ENCODE measurements at regions of chr10 and their contacts with region 1.

Region 1: GRCh38 chr10:44857363-44858016 is 53.6 kb upstream of the TMEM72 start:
- DNase-seq: peak; percentile 89

Region 2: GRCh38 chr10:43671656-43672531 is 1185.6 kb before region 1 on chr10:
- intact Hi-C with region 1: loop called (anchors 2 to 10 kb)
- DNase-seq: no peak

Region 3: DNA sequence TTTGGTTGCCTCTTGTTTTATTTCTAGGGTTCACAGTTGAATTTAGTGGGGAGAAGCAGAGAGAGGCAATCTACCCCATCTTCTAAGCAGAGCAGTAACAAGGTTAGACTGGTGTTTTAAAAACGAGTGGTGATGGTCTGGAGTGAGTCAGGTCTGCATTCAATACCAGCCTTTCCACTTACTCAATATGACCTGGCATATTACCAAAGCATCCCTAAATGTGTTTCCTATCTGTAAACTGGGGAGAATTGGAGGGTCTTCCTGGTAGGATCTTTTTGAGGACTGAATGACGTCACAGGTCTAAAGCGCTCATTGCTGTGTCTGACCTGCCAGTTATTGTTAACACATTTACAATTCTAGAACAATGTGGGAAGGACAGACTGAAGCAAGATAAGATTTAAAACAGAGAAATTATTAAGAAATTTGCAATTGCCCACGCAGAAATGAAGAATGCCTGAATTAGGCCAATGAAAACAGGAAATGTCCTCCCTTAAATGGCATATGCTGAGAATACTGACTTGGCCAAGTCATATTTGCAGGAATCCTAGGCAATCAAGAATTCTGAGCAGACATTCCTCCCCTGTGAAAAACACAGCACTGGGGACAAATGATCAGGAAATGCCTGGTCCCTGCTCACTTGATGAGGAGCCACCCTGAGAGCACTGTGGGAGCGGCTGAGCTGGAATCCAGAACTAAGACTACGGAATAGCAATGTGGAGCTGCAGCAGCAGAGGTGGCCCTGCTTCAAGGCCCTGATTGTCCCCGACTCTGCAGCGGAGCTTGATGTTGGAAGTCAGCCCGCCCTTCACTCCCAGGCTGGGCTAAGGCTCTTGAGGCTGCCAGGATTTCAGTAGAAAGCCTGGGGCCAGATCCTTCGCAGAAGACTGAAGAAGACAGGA is 288.0 kb before region 1 on chr10:
- intact Hi-C with region 1: loop called in 1 of 2 experiments (anchors 10 kb)
- DNase-seq: no peak

Region 4: DNA sequence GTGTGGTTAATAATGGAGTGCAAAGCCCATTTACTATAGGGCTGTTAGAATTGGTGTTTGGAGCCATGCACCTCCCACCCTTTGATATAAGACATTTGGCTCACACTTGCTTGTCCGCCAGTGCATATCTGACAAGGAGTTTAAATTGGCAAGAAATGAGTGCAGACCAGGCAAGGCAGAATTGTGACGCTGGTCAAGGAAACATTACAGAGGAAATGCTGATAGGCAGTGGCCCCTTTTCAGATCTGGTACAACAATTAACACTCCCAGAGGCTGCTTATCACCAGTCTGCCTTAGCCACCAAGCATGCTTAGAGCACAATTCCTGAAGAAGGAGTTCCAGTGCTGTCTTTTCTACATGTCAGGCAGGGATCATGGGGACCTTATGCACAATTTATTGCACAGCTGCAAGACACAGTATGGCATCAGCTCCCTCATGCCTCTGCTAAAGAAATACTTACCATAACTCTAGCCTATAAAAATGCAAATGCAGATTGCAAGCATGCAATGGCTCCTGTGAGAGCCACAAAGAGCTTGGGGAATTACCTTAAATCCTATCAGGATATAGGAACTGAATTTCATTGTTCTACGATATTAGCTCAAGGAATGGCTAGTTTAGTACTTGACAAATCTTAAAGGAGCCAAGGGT is 422.7 kb after region 1 on chr10:
- intact Hi-C with region 1: no loop called
- DNase-seq: no peak

Measured in posterior vena cava (tissue), 2 donors.